ENCODE measurements at regions of chr6 and their contacts with region 1.

Region 1: GRCh38 chr6:129598244-129599187 is 111.5 kb downstream of the ARHGAP18 start:
- DNase-seq: no peak
- ATAC-seq: peak; percentile 93
- H3K4me3 Mint-ChIP-seq: no peak overlapping the region
- H3K27ac Mint-ChIP-seq: no peak overlapping the region
- H3K4me1 Mint-ChIP-seq: peaks cover 5% of the 10 kb centered on the region
- H3K27me3 Mint-ChIP-seq: no peaks in the 10 kb centered on the region
- CTCF ChIP-seq: peak; percentile 53

Region 2: DNA sequence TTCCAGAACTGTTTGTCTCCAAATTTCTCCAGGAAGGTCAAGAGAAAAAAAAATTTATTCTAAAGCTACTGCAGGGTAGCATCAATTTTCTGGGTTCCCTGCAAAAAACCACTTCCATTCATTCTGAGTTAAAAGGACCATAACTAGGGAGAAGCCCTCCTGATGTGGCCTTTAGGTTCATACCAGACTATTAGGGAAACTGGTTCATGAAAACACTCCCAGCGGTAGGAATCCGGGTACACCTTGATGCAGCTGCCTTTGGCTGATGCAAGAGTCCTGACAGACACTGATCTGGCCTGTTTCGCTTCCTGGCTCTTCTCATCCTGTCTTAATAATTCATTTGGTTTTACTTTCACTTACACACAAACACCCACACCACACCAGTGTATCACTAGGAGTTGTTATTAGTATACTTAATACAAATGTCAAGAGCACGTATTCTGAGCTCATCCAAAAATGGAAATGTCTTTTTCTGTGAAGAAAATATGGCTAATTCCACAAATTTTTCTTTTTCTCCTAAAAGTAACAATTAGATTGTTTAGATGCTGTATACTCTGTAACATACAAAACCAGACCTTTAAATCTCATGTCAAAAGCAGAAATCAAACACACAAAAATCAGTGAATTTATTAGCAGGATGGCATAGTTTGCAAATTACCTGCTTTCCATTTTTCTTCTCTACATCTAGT is 149.8 kb after region 1 on chr6:
- CTCF ChIA-PET with region 1: interaction called, 21 read pairs
- POLR2A ChIA-PET with region 1: interaction called, 5 read pairs
- intact Hi-C with region 1: no loop called
- DNase-seq: no peak
- ATAC-seq: peak; percentile 89
- H3K4me3 Mint-ChIP-seq: peak overlapping the region; percentile 66
- H3K27ac Mint-ChIP-seq: peak overlapping the region; percentile 94
- H3K4me1 Mint-ChIP-seq: peaks cover 50% of the 10 kb centered on the region
- H3K27me3 Mint-ChIP-seq: no peaks in the 10 kb centered on the region
- CTCF ChIP-seq: no peak

Region 3: GRCh38 chr6:129936329-129937165 is 338.0 kb after region 1 on chr6:
- CTCF ChIA-PET with region 1: interaction called, 23 read pairs
- POLR2A ChIA-PET with region 1: no interaction called
- intact Hi-C with region 1: loop called (anchors 1 kb)
- DNase-seq: no peak
- ATAC-seq: peak; percentile 50
- H3K4me3 Mint-ChIP-seq: no peak overlapping the region
- H3K27ac Mint-ChIP-seq: no peak overlapping the region
- H3K4me1 Mint-ChIP-seq: peaks cover 4% of the 10 kb centered on the region
- H3K27me3 Mint-ChIP-seq: peaks cover 18% of the 10 kb centered on the region
- CTCF ChIP-seq: peak; percentile 42

Region 4: GRCh38 chr6:130293800-130294199 is 695.3 kb after region 1 on chr6:
- CTCF ChIA-PET with region 1: no interaction called
- POLR2A ChIA-PET with region 1: no interaction called
- intact Hi-C with region 1: loop called (anchors 10 kb)
- DNase-seq: no peak
- ATAC-seq: peak; percentile 61
- H3K4me3 Mint-ChIP-seq: no peak overlapping the region
- H3K27ac Mint-ChIP-seq: no peak overlapping the region
- H3K4me1 Mint-ChIP-seq: peaks cover 5% of the 10 kb centered on the region
- H3K27me3 Mint-ChIP-seq: no peaks in the 10 kb centered on the region
- CTCF ChIP-seq: no peak

Measured in activated B cell treated with CpG ODN at 0.5 μM for 24 hours (primary cell).